H1 (cell line): ENCODE measurements at regions of chr20 and their contacts with region 1.

Region 1: DNA sequence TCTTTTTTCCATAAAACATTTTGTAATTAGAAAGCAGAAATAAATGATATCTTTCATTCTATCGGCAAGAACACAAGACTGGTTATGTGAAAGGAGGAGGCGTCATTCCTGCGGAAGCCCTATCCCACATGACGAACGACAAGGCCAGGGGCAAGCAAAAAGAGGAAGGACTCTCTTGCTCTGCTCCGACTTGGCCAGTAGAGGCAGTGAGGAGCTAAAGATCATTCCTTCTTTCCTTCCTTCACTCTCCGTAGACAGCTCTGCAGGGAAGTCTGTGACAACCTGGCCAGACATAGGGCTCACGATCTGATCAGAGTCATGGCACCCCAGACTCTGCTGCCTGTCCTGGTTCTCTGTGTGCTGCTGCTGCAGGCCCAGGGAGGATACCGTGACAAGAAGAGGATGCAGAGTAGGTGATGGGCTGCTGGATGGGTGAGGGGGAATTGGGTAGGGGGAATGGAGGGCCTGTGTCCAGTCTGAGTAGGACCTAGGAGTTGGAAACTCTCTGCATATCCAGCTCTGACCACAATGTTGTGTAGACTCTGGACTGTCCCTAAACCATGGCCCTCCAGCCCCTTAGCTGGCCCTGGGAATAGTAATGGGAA is at the start of gene WFDC10A:
- DNase-seq: peak; percentile 33 to 65
- H3K4me3 ChIP-seq: no peak within 1 kb of the TSS
- H3K27ac ChIP-seq: no peak within 1 kb of the TSS
- H3K4me1 ChIP-seq: peaks cover 0 to 2% (median 0%) of the 10 kb centered on the region in 4 experiments; a peak in 2 of 7 replicates
- H3K27me3 ChIP-seq: 0 out of 7 replicates have a peak, but pooled peaks cover 0 to 2% (median 0%) of the 10 kb centered on the region in 4 experiments
- CTCF ChIP-seq: peak; percentile 67 to 95 (median 69)
- EP300 ChIP-seq: no peak
- POLR2A ChIP-seq: no peak
- RAD21 ChIP-seq: peak; percentile 68 to 77
- total RNA-seq, gene WFDC10A: not detected in 2 replicates

Region 2: DNA sequence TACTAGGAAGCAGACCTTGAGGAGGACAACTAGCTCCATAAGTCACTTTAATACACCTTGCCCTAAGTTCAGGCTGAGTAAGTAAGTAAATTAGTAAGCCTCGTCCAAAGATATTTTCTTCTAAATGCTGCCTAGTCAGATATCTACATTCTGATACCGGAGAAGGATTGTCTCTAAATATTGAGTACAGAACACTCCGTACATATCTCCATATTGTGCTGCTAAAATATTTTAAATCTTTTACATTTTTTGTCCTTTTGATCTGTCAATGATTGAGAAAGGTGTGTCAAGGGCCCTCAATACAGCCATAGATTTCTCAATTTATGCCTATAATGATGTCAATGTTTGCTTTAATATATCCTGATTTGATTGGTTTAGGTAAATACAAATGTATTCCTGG is 53.7 kb before region 1 on chr20:
- CTCF ChIA-PET with region 1: no interaction called
- POLR2A ChIA-PET with region 1: no interaction called
- DNase-seq: no peak
- H3K4me3 ChIP-seq: no peak overlapping the region
- H3K27ac ChIP-seq: no peak overlapping the region
- H3K4me1 ChIP-seq: peaks cover 0 to 5% (median 2%) of the 10 kb centered on the region in 4 experiments; a peak in 4 of 7 replicates
- H3K27me3 ChIP-seq: no peaks in the 10 kb centered on the region
- CTCF ChIP-seq: no peak
- EP300 ChIP-seq: no peak
- POLR2A ChIP-seq: no peak
- RAD21 ChIP-seq: no peak

Region 3: DNA sequence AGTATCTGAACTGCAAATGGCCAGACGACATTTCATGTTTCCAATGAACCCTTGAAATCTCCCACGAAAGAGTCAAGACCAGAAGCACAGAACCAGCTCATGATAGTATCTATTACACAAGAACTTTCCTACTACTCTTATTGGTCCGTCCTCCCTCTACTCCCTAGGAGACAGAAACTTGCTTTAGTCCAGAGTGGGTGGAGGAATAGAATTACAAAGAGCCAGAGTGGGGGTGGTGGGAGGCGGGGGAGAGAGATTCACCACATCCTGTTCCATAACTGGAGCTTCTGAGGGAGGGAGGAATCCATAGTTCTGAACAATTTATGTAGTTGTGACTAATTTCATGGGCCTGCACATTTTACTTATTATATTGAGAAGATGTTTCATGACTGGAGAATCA is 18.5 kb before region 1 on chr20:
- CTCF ChIA-PET with region 1: interaction called, 29 read pairs
- POLR2A ChIA-PET with region 1: no interaction called
- DNase-seq: no peak
- H3K4me3 ChIP-seq: no peak overlapping the region
- H3K27ac ChIP-seq: no peak overlapping the region
- H3K4me1 ChIP-seq: peaks cover 0 to 3% (median 0%) of the 10 kb centered on the region in 4 experiments; a peak in 2 of 7 replicates
- H3K27me3 ChIP-seq: no peaks in the 10 kb centered on the region
- CTCF ChIP-seq: no peak
- EP300 ChIP-seq: no peak
- POLR2A ChIP-seq: no peak
- RAD21 ChIP-seq: no peak

Region 4: DNA sequence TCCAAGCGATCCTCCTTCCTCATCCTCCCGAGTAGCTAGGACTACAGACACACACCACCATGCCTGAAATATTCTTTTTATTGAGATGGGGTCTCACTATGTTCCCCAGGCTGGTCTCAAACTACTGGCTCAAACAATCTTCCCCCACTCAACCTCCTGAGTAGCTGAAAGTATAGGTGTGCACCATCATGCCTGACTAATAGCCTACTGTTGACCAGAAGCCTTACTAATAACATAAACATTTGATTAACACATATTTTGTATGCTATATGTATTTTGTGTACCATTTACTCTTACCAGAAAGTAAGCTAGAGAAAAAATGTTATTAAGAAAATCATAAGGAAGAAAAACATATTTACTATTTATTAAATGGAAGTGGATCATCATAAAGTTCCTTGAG is 12.0 kb before region 1 on chr20:
- CTCF ChIA-PET with region 1: interaction called, 29 read pairs
- POLR2A ChIA-PET with region 1: interaction called, 3 read pairs
- DNase-seq: no peak
- H3K4me3 ChIP-seq: no peak overlapping the region
- H3K27ac ChIP-seq: no peak overlapping the region
- H3K4me1 ChIP-seq: no peaks in the 10 kb centered on the region
- H3K27me3 ChIP-seq: no peaks in the 10 kb centered on the region
- CTCF ChIP-seq: no peak
- EP300 ChIP-seq: no peak
- POLR2A ChIP-seq: no peak
- RAD21 ChIP-seq: no peak

Region 5: DNA sequence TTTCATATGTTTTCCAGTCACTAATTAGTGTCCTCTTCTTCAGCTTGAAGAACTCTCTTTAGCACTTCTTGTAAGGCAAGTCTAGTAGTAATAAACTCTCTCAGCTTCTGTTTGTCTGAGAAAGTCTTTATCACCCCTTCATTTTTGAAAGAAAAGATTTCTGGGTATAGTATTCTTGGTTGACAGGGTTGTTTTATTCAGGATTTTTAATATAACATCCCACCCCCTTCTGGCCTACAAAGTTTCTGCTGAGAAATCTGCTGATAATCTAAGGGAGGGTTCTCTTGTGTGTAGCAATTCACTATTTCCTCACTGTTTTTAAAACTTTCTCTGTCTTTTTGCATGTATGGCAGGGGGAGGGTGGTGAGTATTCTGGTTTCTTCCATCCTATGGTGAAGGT is 50.1 kb after region 1 on chr20:
- CTCF ChIA-PET with region 1: interaction called, 12 read pairs
- POLR2A ChIA-PET with region 1: no interaction called
- DNase-seq: no peak
- H3K4me3 ChIP-seq: no peak overlapping the region
- H3K27ac ChIP-seq: no peak overlapping the region
- H3K4me1 ChIP-seq: no peaks in the 10 kb centered on the region
- H3K27me3 ChIP-seq: no peaks in the 10 kb centered on the region
- CTCF ChIP-seq: no peak
- EP300 ChIP-seq: no peak
- POLR2A ChIP-seq: no peak
- RAD21 ChIP-seq: no peak